HEK293 (cell line): ENCODE measurements at regions of chr14 and their contacts with region 1.

Region 1: GRCh38 chr14:106417224-106418049 is 891.1 kb downstream of the TMEM121 start:
- H3K4me3 ChIP-seq: no peak overlapping the region
- H3K27ac ChIP-seq: no peak overlapping the region
- H3K4me1 ChIP-seq: no peaks in the 10 kb centered on the region
- CTCF ChIP-seq: peak; percentile 87

Region 2: GRCh38 chr14:106129274-106129673 is 288.2 kb before region 1 on chr14:
- CTCF ChIA-PET with region 1: no interaction called
- POLR2A ChIA-PET with region 1: no interaction called
- H3K4me3 ChIP-seq: no peak overlapping the region
- H3K27ac ChIP-seq: no peak overlapping the region
- H3K4me1 ChIP-seq: no peaks in the 10 kb centered on the region
- CTCF ChIP-seq: no peak

Region 3: DNA sequence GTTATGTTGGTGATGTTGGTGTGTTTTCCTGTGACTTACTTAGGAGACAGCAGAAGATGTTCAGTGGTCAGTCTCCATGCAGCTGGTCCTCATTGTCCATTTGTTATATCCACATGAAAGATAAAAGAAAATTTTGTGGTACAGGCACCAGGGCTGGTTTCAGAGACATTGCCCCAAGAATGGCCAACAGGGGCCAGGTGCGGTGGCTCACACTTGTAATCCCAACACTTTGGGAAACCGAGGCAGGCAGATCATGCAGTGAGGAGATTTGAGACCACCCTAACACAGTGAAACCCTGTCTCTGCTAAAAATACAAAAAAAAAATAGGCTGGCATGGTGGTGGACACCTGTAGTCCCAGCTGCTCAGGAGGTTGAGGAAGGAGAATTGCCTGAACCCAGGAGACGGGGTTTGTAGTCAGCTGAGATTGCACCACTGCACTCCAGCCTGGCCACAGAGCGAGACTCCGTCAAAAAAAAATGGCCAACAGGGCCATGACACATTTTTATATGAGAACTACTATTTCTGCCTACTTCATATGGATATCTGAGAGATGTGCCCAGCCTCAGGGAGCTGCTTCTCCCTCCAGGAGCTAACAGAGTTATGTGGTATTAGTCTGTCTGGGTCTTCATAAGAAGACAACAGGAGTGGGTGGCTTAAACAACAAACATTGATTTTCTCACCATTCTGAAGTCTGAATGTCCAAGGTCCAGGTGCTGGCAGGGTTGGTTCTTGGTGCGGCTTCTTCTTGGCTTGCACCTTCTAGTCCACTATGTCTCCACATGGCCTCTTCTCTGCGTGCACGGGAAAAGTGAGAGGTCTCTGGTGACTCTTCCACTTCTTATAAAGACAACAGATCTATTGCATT is 69.3 kb before region 1 on chr14:
- CTCF ChIA-PET with region 1: interaction called, 36 read pairs
- POLR2A ChIA-PET with region 1: interaction called, 3 read pairs
- H3K4me3 ChIP-seq: no peak overlapping the region
- H3K27ac ChIP-seq: no peak overlapping the region
- H3K4me1 ChIP-seq: no peaks in the 10 kb centered on the region; the same call in 1 of the 2 replicates
- CTCF ChIP-seq: no peak

Region 4: DNA sequence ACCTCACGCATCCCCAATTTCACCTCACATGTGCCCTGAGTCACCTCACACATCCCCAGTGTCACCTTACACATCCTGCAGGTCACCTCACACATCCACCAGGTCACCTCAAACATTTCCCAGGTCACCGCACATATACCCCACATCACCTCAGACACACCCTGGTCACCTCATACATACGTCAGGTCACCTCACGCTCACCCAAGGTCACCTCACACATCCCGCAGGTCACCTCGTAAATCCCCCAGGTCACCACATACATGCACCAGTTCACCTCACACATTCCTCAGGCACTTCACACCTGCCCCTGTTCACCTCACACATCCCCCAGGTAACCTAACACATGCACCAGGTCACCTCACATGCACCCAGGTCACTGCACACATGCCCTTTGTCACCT is 27.0 kb before region 1 on chr14:
- CTCF ChIA-PET with region 1: interaction called, 14 read pairs
- POLR2A ChIA-PET with region 1: no interaction called
- H3K4me3 ChIP-seq: no peak overlapping the region
- H3K27ac ChIP-seq: no peak overlapping the region
- H3K4me1 ChIP-seq: no peaks in the 10 kb centered on the region
- CTCF ChIP-seq: no peak

Region 5: GRCh38 chr14:106455026-106455425 is 37.6 kb after region 1 on chr14:
- CTCF ChIA-PET with region 1: interaction called, 10 read pairs
- POLR2A ChIA-PET with region 1: no interaction called
- H3K4me3 ChIP-seq: no peak overlapping the region
- H3K27ac ChIP-seq: no peak overlapping the region
- H3K4me1 ChIP-seq: no peaks in the 10 kb centered on the region
- CTCF ChIP-seq: no peak

Region 6: DNA sequence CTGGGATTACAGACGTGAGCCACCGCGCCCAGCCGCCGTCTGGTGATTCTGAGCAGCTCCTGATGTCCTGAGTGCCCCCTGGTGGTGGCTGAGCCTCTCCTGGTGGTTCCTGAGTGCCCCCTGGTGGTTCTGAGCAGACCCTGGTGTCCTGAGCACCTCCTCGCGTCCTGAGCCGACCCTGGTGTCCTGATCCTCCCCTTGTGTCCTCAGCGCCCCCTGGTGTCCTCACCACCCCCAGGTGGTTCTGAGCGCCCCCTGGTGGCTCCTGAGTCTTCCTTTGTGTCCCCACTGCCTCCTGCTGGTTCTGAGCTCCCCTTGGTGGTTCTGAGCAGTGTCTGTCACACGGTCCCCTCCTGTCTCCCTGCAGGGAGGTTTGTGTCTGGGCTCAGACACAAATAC is 413.9 kb after region 1 on chr14:
- CTCF ChIA-PET with region 1: interaction called, 10 read pairs
- POLR2A ChIA-PET with region 1: no interaction called
- H3K4me3 ChIP-seq: no peak overlapping the region
- H3K27ac ChIP-seq: no peak overlapping the region
- H3K4me1 ChIP-seq: no peaks in the 10 kb centered on the region
- CTCF ChIP-seq: peak; percentile 80

Region 7: GRCh38 chr14:106844608-106845285 is 427.3 kb after region 1 on chr14:
- CTCF ChIA-PET with region 1: no interaction called
- POLR2A ChIA-PET with region 1: no interaction called
- H3K4me3 ChIP-seq: peak overlapping the region; percentile 28
- H3K27ac ChIP-seq: peak overlapping the region; percentile 58; the same call in 1 of the 2 replicates
- H3K4me1 ChIP-seq: peaks cover 24% of the 10 kb centered on the region
- CTCF ChIP-seq: no peak